Activated B cell treated with CpG ODN at 0.5 μM for 24 hours (primary cell): ENCODE measurements at regions of chr11 and their contacts with region 1.

Region 1: DNA sequence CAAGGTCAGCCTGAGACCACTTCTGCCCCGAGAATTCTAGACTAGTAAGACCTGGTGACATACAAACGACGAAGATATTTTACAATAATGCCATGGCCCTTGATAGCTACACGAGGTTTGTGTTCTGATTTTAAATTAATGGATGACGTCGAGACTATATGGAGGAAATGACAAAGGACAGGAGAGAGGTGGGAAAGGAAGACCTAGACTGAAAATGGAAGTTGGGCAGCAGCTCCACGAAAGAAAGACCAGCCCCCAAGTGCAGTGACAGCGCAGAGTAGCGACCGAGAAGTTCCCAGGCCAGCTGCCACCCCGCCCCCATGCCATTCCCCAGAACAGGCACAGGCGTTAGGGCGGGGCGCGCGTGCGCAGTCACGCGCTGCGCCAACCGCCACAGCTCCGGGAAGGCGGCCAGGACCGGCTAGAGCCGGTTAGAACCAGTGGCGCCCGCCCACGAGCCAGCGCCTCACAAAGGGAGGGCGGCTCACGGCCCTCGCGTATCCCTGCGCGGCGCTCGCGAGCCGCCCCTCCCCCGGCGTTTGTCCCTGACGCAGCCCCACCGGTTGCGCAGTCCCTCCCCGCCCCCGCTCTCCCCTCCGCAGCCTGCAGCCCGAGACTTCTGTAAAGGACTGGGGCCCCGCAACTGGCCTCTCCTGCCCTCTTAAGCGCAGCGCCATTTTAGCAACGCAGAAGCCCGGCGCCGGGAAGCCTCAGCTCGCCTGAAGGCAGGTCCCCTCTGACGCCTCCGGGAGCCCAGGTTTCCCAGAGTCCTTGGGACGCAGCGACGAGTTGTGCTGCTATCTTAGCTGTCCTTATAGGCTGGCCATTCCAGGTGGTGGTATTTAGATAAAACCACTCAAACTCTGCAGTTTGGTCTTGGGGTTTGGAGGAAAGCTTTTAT is 1.5 kb upstream of the MALAT1 start:
- DNase-seq: peak; percentile 98
- ATAC-seq: peak; percentile 74
- H3K4me3 Mint-ChIP-seq: no peak overlapping the region
- H3K27ac Mint-ChIP-seq: no peak overlapping the region
- H3K4me1 Mint-ChIP-seq: peaks cover 53% of the 10 kb centered on the region
- H3K27me3 Mint-ChIP-seq: no peaks in the 10 kb centered on the region
- CTCF ChIP-seq: no peak

Region 2: DNA sequence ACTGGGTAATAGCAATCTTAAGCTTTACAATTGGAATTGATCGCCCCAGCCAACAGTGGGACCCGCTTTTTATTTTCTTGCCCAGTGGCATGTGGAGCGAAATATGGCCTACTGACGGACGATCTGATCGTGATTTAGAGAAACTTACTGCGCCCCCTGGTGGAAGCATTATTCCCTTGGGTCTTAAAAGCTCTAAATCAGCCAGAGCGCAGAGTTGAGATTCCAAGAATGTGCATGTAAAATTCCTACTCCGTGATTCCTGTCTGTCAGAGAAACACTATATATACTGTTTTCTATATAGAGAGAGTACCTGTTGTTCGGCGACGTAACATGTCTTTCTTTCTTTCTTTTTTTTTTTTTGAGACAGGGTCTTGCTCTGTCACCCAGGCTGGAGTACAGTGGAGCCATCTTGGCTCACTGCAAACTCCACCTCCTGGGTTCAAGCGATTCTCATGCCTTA is 167.4 kb before region 1 on chr11:
- CTCF ChIA-PET with region 1: no interaction called
- POLR2A ChIA-PET with region 1: interaction called, 12 read pairs
- intact Hi-C with region 1: no loop called
- DNase-seq: peak; percentile 56
- ATAC-seq: peak; percentile 43
- H3K4me3 Mint-ChIP-seq: peak overlapping the region; percentile 78
- H3K27ac Mint-ChIP-seq: peak overlapping the region; percentile 96
- H3K4me1 Mint-ChIP-seq: peaks cover 24% of the 10 kb centered on the region
- H3K27me3 Mint-ChIP-seq: no peaks in the 10 kb centered on the region
- CTCF ChIP-seq: no peak

Region 3: GRCh38 chr11:65391007-65391406 is 106.4 kb before region 1 on chr11:
- CTCF ChIA-PET with region 1: interaction called, 3 read pairs
- POLR2A ChIA-PET with region 1: interaction called, 584 read pairs
- intact Hi-C with region 1: no loop called
- DNase-seq: no peak
- ATAC-seq: no peak
- H3K4me3 Mint-ChIP-seq: peak overlapping the region; percentile 19
- H3K27ac Mint-ChIP-seq: no peak overlapping the region
- H3K4me1 Mint-ChIP-seq: peaks cover 56% of the 10 kb centered on the region
- H3K27me3 Mint-ChIP-seq: no peaks in the 10 kb centered on the region
- CTCF ChIP-seq: no peak

Region 4: DNA sequence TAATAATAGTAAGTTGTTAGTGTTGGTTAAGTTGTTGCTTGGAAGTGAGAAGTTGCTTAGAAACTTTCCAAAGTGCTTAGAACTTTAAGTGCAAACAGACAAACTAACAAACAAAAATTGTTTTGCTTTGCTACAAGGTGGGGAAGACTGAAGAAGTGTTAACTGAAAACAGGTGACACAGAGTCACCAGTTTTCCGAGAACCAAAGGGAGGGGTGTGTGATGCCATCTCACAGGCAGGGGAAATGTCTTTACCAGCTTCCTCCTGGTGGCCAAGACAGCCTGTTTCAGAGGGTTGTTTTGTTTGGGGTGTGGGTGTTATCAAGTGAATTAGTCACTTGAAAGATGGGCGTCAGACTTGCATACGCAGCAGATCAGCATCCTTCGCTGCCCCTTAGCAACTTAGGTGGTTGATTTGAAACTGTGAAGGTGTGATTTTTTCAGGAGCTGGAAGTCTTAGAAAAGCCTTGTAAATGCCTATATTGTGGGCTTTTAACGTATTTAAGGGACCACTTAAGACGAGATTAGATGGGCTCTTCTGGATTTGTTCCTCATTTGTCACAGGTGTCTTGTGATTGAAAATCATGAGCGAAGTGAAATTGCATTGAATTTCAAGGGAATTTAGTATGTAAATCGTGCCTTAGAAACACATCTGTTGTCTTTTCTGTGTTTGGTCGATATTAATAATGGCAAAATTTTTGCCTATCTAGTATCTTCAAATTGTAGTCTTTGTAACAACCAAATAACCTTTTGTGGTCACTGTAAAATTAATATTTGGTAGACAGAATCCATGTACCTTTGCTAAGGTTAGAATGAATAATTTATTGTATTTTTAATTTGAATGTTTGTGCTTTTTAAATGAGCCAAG is 72.1 kb before region 1 on chr11:
- CTCF ChIA-PET with region 1: interaction called, 289 read pairs
- POLR2A ChIA-PET with region 1: interaction called, 3,752 read pairs
- intact Hi-C with region 1: loop called (anchors 1 kb)
- DNase-seq: no peak
- ATAC-seq: peak; percentile 38
- H3K4me3 Mint-ChIP-seq: peak overlapping the region; percentile 100
- H3K27ac Mint-ChIP-seq: peak overlapping the region; percentile 100
- H3K4me1 Mint-ChIP-seq: peaks cover 78% of the 10 kb centered on the region
- H3K27me3 Mint-ChIP-seq: no peaks in the 10 kb centered on the region
- CTCF ChIP-seq: no peak

Region 5: DNA sequence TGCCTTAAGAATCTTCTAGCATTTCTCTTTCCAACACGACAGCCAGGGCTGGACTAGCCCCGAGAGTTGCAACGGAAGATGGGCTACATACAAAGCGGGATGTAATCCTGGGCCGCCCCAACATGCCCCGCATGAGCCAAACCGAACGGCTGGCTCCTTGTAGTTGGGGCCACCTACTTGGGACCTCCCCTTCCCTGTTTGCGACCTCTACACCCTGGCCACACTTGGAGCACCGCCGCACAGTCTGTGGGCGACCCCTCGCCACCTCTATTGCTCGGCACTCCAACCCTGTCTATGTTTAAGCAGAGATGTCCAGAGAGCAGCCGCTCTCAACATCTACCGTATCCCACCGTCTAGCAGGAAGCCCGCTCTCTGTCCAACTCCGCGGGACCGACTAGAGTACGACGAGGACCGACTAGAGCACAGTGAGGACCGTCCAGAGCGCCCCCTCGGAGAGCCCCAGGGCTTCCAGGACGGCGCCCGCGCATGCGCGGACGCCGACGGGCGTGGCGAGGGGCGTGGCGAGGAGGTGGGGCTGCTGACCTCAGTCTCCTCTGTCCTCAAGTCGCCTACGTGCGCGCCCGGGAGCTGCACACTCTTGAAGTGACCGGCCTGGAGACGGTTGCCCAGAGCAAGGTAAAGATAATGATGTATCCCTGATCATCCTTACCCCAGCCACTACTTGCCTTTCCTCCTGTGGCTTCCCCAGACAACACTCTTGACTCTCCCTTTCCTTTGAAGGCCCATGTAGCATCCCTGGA is 42.5 kb before region 1 on chr11:
- CTCF ChIA-PET with region 1: no interaction called
- POLR2A ChIA-PET with region 1: interaction called, 1,949 read pairs
- intact Hi-C with region 1: no loop called
- DNase-seq: peak; percentile 83
- ATAC-seq: peak; percentile 98
- H3K4me3 Mint-ChIP-seq: peak overlapping the region; percentile 95
- H3K27ac Mint-ChIP-seq: peak overlapping the region; percentile 90
- H3K4me1 Mint-ChIP-seq: peaks cover 32% of the 10 kb centered on the region
- H3K27me3 Mint-ChIP-seq: no peaks in the 10 kb centered on the region
- CTCF ChIP-seq: no peak

Region 6: DNA sequence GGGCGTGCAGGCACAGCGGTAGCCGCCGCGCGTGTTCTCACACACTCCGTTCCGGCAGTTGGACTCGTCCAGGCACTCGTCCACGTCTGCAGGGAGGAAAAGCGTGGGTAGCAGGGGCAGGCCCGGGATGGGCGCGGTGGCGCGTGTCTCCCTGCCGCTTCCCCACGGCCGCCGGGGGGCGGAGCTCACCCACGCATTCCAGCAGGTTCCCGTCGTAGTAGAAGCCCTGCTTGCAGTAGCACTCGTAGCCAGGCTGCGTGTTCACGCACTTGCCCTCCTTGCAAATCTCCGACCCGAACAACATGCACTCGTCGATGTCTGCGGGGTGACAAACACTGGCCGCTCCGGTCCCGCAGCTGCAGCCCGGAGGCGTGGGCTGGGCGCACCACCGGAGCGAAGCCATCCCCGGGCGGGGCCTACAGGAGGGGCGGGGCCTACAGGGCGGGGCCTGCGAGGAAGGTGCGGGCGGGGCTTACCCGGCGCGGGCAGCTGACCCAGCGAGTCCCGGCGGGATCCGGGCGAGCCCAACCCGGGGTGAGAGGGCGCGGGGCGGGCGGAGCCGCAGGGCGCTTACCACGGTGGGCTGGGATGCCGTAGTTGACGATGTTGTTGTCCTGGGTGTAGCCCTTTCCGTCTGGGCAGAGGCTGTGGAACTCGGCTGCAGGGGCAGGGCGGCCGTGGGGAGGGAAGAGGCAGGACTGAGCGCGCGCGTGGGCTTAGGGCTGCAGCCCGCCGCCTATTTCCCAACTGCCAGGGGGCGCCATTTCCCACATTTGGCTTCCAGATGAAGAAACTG is 43.1 kb after region 1 on chr11:
- CTCF ChIA-PET with region 1: no interaction called
- POLR2A ChIA-PET with region 1: interaction called, 11 read pairs
- intact Hi-C with region 1: no loop called
- DNase-seq: peak; percentile 88
- ATAC-seq: peak; percentile 88
- H3K4me3 Mint-ChIP-seq: peak overlapping the region; percentile 88
- H3K27ac Mint-ChIP-seq: peak overlapping the region; percentile 86
- H3K4me1 Mint-ChIP-seq: peaks cover 22% of the 10 kb centered on the region
- H3K27me3 Mint-ChIP-seq: no peaks in the 10 kb centered on the region
- CTCF ChIP-seq: no peak

Region 7: DNA sequence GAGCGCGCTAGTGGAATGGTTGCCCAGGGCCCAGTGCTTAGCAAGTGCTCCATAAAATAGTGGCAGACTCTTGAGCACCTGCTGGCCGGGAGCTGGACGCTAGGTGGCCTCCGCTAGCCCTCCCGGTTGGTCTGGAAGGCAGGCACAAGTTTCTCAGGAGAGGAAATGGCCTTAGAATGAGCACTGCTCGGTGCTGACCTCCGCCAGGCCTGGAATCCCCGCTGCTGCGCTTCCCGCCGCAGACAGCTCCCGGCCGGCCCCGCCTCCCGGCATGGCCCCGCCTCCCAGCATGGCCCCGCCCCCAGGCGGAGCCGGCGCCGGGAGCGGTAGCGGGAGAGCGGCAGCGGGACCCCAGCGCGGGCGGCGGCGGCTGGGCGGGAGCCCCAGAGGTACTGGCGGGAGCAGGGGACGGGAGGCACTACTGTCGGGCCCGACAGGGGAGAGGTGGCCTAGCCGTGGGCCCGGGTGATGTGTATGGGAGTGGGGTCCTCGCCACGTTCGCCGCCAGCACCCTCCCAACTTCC is 140.5 kb after region 1 on chr11 and contains the start of gene SIPA1:
- CTCF ChIA-PET with region 1: no interaction called
- POLR2A ChIA-PET with region 1: interaction called, 22 read pairs
- intact Hi-C with region 1: no loop called
- DNase-seq: peak; percentile 86
- ATAC-seq: peak; percentile 35
- H3K4me3 Mint-ChIP-seq: peak within 1 kb of the TSS; percentile 94
- H3K27ac Mint-ChIP-seq: peak within 1 kb of the TSS; percentile 96
- H3K4me1 Mint-ChIP-seq: peaks cover 51% of the 10 kb centered on the region
- H3K27me3 Mint-ChIP-seq: no peaks in the 10 kb centered on the region
- CTCF ChIP-seq: no peak
- total RNA-seq, gene SIPA1: 236 and 252 TPM in 2 replicates

Region 8: DNA sequence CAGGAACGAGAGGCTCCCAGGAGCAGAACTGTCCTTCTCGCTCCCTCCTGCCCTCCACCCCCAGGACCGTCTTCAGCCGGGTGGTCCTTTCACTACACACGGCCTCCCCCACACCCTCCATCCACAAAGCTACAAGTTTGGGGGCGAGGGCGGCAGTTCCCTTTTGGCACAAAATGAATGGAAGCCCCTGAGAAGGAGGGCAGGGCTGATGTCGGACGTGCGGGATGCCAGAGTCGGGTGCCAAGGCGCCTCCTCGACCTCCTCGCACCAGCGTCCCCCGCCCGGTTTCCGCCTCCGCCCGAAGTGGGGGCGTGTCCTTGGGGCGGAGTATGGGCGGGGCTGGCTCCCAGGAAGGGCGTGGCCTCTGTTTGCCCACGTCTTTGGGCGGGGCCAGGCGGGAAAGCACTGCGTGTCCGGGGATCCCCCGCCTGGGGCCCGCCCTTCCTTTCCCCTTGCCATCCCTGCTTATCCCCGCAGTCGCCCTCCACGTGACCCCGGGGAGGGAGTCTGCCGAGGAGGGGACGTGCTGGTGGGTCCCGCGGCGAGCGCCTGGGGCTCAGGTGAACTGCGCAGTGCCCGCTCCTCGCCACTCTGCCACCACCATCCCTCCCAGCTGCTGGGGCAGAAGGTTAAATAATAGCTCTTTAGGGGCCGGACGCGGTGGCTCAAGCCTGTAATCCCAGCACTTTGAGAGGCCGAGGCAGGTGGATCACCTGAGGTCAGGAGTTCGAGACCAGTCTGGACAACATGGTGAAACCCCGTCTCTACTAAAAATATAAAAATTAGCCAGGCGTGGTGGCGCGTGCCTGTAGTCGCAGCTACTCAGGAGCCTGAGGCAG is 376.1 kb after region 1 on chr11:
- CTCF ChIA-PET with region 1: no interaction called
- POLR2A ChIA-PET with region 1: no interaction called
- intact Hi-C with region 1: no loop called
- DNase-seq: peak; percentile 99
- ATAC-seq: peak; percentile 95
- H3K4me3 Mint-ChIP-seq: peak overlapping the region; percentile 90
- H3K27ac Mint-ChIP-seq: peak overlapping the region; percentile 88
- H3K4me1 Mint-ChIP-seq: peaks cover 20% of the 10 kb centered on the region
- H3K27me3 Mint-ChIP-seq: peaks cover 5% of the 10 kb centered on the region
- CTCF ChIP-seq: no peak

Region 9: GRCh38 chr11:66868726-66869566 is 1371.6 kb after region 1 on chr11:
- CTCF ChIA-PET with region 1: no interaction called
- POLR2A ChIA-PET with region 1: no interaction called
- intact Hi-C with region 1: no loop called
- DNase-seq: peak; percentile 70
- ATAC-seq: peak; percentile 99
- H3K4me3 Mint-ChIP-seq: no peak overlapping the region
- H3K27ac Mint-ChIP-seq: no peak overlapping the region
- H3K4me1 Mint-ChIP-seq: peaks cover 16% of the 10 kb centered on the region
- H3K27me3 Mint-ChIP-seq: no peaks in the 10 kb centered on the region
- CTCF ChIP-seq: no peak